ENCODE measurements at regions of chr2 and their contacts with region 1.

Region 1: GRCh38 chr2:9508931-9509330 is 34.6 kb downstream of the IAH1 start:
- DNase-seq: no peak
- ATAC-seq: peak; percentile 42
- H3K4me3 ChIP-seq: no peak overlapping the region
- H3K27ac ChIP-seq: no peak overlapping the region
- H3K4me1 ChIP-seq: no peaks in the 10 kb centered on the region
- H3K27me3 ChIP-seq: no peaks in the 10 kb centered on the region
- CTCF ChIP-seq: no peak
- POLR2A ChIP-seq: no peak
- RAD21 ChIP-seq: no peak

Region 2: DNA sequence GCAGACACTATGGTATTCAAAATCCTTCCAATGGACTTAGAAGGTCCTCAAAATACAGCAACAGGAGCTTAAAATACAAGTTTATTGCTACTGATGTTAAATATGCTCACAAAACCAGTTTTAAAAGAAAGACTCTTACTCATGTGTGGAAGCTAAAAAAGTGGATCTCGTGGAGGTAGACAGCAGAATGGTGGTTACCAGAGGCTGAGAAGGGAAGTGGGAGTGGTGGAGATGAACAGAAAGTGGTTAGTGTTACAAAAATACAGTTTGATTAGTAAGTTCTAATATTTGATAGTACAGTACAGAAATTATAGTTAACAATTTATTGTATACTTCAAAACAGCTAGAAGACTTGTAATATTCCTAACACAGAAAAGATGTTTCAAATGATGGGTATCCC is 34.6 kb after region 1 on chr2:
- CTCF ChIA-PET with region 1: no interaction called
- POLR2A ChIA-PET with region 1: no interaction called
- dilution Hi-C with region 1: no loop called
- in situ Hi-C with region 1: no loop called
- intact Hi-C with region 1: loop called (anchors 5 kb)
- DNase-seq: no peak
- ATAC-seq: no peak
- H3K4me3 ChIP-seq: no peak overlapping the region
- H3K27ac ChIP-seq: no peak overlapping the region
- H3K4me1 ChIP-seq: peaks cover 8% of the 10 kb centered on the region
- H3K27me3 ChIP-seq: no peaks in the 10 kb centered on the region
- CTCF ChIP-seq: no peak
- POLR2A ChIP-seq: no peak
- RAD21 ChIP-seq: no peak

Region 3: DNA sequence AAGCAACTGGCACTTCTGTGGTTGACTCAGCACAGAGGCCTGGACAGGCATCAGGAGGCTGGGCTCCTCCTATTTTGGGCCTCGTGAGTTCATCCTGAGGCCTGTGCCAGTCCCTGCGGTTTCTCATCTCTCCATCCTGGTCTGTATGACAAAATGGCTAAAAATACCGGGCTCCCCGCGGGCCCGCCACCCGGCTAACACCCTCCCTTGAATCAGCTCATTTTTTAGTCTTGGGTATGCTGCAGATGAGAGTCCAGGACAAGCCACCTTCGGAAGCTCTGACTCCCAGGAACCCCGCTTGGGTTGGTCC is 184.2 kb after region 1 on chr2:
- CTCF ChIA-PET with region 1: no interaction called
- POLR2A ChIA-PET with region 1: no interaction called
- dilution Hi-C with region 1: no loop called
- in situ Hi-C with region 1: no loop called
- intact Hi-C with region 1: no loop called
- DNase-seq: peak; percentile 48
- ATAC-seq: peak; percentile 76
- H3K4me3 ChIP-seq: no peak overlapping the region
- H3K27ac ChIP-seq: no peak overlapping the region
- H3K4me1 ChIP-seq: no peaks in the 10 kb centered on the region; the same call in 1 of the 2 replicates
- H3K27me3 ChIP-seq: peaks cover 5% of the 10 kb centered on the region; the same call in 1 of the 2 replicates
- CTCF ChIP-seq: no peak
- POLR2A ChIP-seq: no peak
- RAD21 ChIP-seq: no peak

Region 4: GRCh38 chr2:9984217-9984739 is 475.3 kb after region 1 on chr2:
- CTCF ChIA-PET with region 1: no interaction called
- POLR2A ChIA-PET with region 1: no interaction called
- dilution Hi-C with region 1: no loop called
- in situ Hi-C with region 1: no loop called
- intact Hi-C with region 1: no loop called
- DNase-seq: peak; percentile 48
- ATAC-seq: peak; percentile 69
- H3K4me3 ChIP-seq: no peak overlapping the region
- H3K27ac ChIP-seq: no peak overlapping the region
- H3K4me1 ChIP-seq: peaks cover 12% of the 10 kb centered on the region
- H3K27me3 ChIP-seq: no peaks in the 10 kb centered on the region
- CTCF ChIP-seq: peak; percentile 64
- POLR2A ChIP-seq: no peak
- RAD21 ChIP-seq: peak; percentile 63